Activated naive CD4-positive, alpha-beta T cell treated with anti-CD3 and anti-CD28 coated beads, Interleukin-2, amount 10 ng/mL, durations not matched to agents 7 days and 5 days (primary cell): ENCODE measurements at regions of chr1 and their contacts with region 1.

Region 1: GRCh38 chr1:156282479-156283222 is at the start of gene SMG5:
- DNase-seq: peak; percentile 98
- H3K4me3 Mint-ChIP-seq: peak within 1 kb of the TSS; percentile 82
- H3K27ac Mint-ChIP-seq: peak within 1 kb of the TSS; percentile 88
- H3K4me1 Mint-ChIP-seq: peaks cover 39% of the 10 kb centered on the region
- H3K27me3 Mint-ChIP-seq: no peaks in the 10 kb centered on the region

Region 2: GRCh38 chr1:156319664-156320063 is 37.0 kb after region 1 on chr1:
- CTCF ChIA-PET with region 1: interaction called, 11 read pairs
- DNase-seq: peak; percentile 49
- H3K4me3 Mint-ChIP-seq: no peak overlapping the region
- H3K27ac Mint-ChIP-seq: no peak overlapping the region
- H3K4me1 Mint-ChIP-seq: no peaks in the 10 kb centered on the region
- H3K27me3 Mint-ChIP-seq: no peaks in the 10 kb centered on the region